ENCODE measurements at regions of chr14 and their contacts with region 1.

Region 1: GRCh38 chr14:57171363-57171762 is 97.3 kb downstream of the EXOC5 start:
- DNase-seq: no peak
- ATAC-seq: no peak
- H3K4me3 ChIP-seq: no peak overlapping the region
- H3K27ac ChIP-seq: no peak overlapping the region
- H3K4me1 ChIP-seq: no peaks in the 10 kb centered on the region
- H3K27me3 ChIP-seq: peaks cover 0 to 4% of the 10 kb centered on the region in 2 experiments; a peak in 2 of 5 replicates
- CTCF ChIP-seq: no peak
- EP300 ChIP-seq: no peak
- POLR2A ChIP-seq: no peak
- RAD21 ChIP-seq: no peak

Region 2: GRCh38 chr14:56561606-56562005 is 609.8 kb before region 1 on chr14:
- CTCF ChIA-PET with region 1: no interaction called
- POLR2A ChIA-PET with region 1: no interaction called
- in situ Hi-C with region 1: loop called (anchors 10 kb)
- intact Hi-C with region 1: no loop called
- DNase-seq: no peak
- ATAC-seq: no peak
- H3K4me3 ChIP-seq: no peak overlapping the region
- H3K27ac ChIP-seq: no peak overlapping the region
- H3K4me1 ChIP-seq: no peaks in the 10 kb centered on the region; a peak in 2 of 5 replicates
- H3K27me3 ChIP-seq: no peaks in the 10 kb centered on the region; a peak in 2 of 5 replicates
- CTCF ChIP-seq: no peak
- EP300 ChIP-seq: no peak
- POLR2A ChIP-seq: no peak
- RAD21 ChIP-seq: no peak